ENCODE measurements at regions of chr6 and their contacts with region 1.

Region 1: GRCh38 chr6:105317607-105318533 is 85.0 kb downstream of the PREP start:
- DNase-seq: no peak
- H3K4me3 ChIP-seq: no peak overlapping the region
- H3K27ac ChIP-seq: peak overlapping the region; percentile 45
- H3K4me1 ChIP-seq: peaks cover 29% of the 10 kb centered on the region
- H3K27me3 ChIP-seq: no peaks in the 10 kb centered on the region
- CTCF ChIP-seq: peak; percentile 36 to 62

Region 2: GRCh38 chr6:105204331-105204730 is 113.5 kb before region 1 on chr6:
- CTCF ChIA-PET with region 1: no interaction called
- dilution Hi-C with region 1: no loop called
- in situ Hi-C with region 1: no loop called
- intact Hi-C with region 1: no loop called
- DNase-seq: peak; percentile 46
- H3K4me3 ChIP-seq: no peak overlapping the region
- H3K27ac ChIP-seq: no peak overlapping the region
- H3K4me1 ChIP-seq: peaks cover 33% of the 10 kb centered on the region
- H3K27me3 ChIP-seq: no peaks in the 10 kb centered on the region
- CTCF ChIP-seq: no peak

Region 3: GRCh38 chr6:105257340-105257739 is 60.5 kb before region 1 on chr6:
- CTCF ChIA-PET with region 1: no interaction called
- dilution Hi-C with region 1: no loop called
- in situ Hi-C with region 1: no loop called
- intact Hi-C with region 1: no loop called
- DNase-seq: no peak
- H3K4me3 ChIP-seq: no peak overlapping the region
- H3K27ac ChIP-seq: no peak overlapping the region
- H3K4me1 ChIP-seq: no peaks in the 10 kb centered on the region
- H3K27me3 ChIP-seq: no peaks in the 10 kb centered on the region
- CTCF ChIP-seq: no peak

Region 4: DNA sequence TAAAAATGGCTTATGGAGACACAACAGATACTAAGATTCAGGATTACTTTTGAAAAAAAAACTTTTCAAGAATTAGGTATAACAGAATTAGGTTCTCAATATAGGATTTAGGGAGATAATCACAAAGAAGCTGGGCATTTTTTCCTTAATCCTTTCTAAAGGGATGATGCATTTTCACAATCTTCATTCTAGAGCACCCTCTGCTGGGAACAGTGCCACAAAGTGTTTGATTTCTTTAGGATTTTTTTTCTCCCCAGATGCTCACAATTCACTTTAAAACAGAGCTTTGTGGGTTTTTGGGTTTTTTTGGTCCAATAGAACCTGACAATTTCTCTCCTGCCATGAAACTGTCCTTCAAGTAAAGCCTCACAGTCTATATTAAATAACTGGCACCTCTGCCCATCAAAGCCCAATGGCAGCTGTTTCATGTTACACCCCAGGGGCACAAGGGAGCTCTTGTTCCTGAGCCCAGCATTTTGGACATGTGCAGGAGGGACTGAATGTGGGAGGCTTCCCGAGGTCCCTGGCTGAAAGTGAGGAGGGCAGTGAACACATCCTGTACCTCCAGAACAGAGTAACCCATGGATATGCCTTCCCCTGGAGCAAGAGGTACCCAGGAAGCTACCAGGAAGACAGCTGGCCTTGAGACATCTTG is 45.4 kb after region 1 on chr6:
- CTCF ChIA-PET with region 1: no interaction called
- dilution Hi-C with region 1: no loop called
- in situ Hi-C with region 1: no loop called
- intact Hi-C with region 1: loop called (anchors 1 kb)
- DNase-seq: peak; percentile 33
- H3K4me3 ChIP-seq: no peak overlapping the region
- H3K27ac ChIP-seq: peak overlapping the region; percentile 94
- H3K4me1 ChIP-seq: peaks cover 58% of the 10 kb centered on the region
- H3K27me3 ChIP-seq: no peaks in the 10 kb centered on the region
- CTCF ChIP-seq: peak; percentile 32 to 49

Region 5: DNA sequence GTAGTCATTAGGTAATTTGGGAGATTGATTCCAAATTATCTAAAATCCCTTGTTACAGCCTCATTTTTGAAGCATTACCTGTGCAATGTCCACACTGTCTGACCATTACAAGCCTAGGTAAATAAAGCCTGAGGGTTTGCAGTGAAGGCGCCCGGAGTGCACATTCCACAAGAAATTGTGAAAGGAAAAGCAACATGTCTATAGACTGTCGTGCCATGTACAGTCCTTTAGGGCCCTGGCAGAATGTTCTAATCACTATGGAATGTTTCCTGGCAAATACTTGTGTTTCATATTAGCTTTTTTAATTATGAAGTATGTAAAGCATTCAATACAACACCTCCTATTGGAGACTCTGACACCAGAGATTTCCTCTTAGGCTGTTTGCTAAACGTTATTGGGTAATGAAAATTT is 56.1 kb after region 1 on chr6:
- CTCF ChIA-PET with region 1: no interaction called
- dilution Hi-C with region 1: no loop called
- in situ Hi-C with region 1: no loop called
- intact Hi-C with region 1: loop called (anchors 1 kb)
- DNase-seq: peak; percentile 79
- H3K4me3 ChIP-seq: peak overlapping the region in 1 of 3 experiments; percentile 17
- H3K27ac ChIP-seq: peak overlapping the region; percentile 97
- H3K4me1 ChIP-seq: peaks cover 35% of the 10 kb centered on the region
- H3K27me3 ChIP-seq: no peaks in the 10 kb centered on the region
- CTCF ChIP-seq: peak in 1 of 2 donors; percentile 23

Region 6: DNA sequence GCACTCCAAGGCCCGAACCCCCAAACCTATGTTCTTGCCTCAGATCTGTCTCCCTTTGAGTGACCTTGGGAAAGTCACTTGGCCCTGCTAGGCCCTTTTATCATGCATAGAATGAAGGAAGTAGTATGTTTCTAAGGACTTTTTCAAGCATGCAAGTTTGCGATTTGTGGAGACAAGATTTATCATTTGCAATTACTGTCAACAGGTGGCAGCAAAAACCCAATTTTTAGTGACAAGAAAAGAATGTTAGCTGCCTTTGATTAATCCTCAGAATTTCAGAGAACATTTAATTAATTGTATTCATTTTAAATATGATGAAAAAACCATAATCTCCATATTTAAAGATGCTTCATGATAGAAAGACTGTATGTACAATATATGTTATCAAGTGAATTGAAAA is 113.4 kb after region 1 on chr6:
- CTCF ChIA-PET with region 1: no interaction called
- dilution Hi-C with region 1: no loop called
- in situ Hi-C with region 1: no loop called
- intact Hi-C with region 1: no loop called
- DNase-seq: peak; percentile 46
- H3K4me3 ChIP-seq: no peak overlapping the region
- H3K27ac ChIP-seq: no peak overlapping the region
- H3K4me1 ChIP-seq: peaks cover 35% of the 10 kb centered on the region
- H3K27me3 ChIP-seq: no peaks in the 10 kb centered on the region
- CTCF ChIP-seq: peak; percentile 57

Region 7: GRCh38 chr6:105469948-105470347 is 152.1 kb after region 1 on chr6:
- CTCF ChIA-PET with region 1: no interaction called
- dilution Hi-C with region 1: no loop called
- in situ Hi-C with region 1: no loop called
- intact Hi-C with region 1: no loop called
- DNase-seq: no peak
- H3K4me3 ChIP-seq: no peak overlapping the region
- H3K27ac ChIP-seq: no peak overlapping the region
- H3K4me1 ChIP-seq: no peaks in the 10 kb centered on the region
- H3K27me3 ChIP-seq: no peaks in the 10 kb centered on the region
- CTCF ChIP-seq: no peak

Measured in mammary epithelial cell (primary cell).